ENCODE measurements at regions of chr5 and their contacts with region 1.

Region 1: DNA sequence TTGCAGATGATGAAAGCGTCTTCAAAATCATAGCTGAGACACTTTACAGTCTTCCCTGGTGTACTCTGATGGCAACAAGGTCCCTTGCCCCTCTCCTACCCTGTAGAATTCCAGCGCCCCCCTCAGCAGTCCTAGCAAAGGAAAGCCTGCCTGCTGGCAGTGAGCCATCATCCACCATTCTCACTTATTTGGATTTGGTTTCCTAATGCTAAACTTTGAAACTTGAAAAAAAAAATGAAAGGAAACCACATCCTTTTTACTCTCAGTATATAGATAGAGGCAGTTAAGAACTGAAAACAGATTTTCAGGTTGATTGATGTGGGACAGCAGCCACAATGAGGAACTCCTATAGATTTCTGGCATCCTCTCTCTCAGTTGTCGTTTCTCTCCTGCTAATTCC is at the start of gene GZMA:
- DNase-seq: peak; percentile 86
- H3K4me3 Mint-ChIP-seq: peak within 1 kb of the TSS; percentile 80
- H3K27ac Mint-ChIP-seq: peak within 1 kb of the TSS; percentile 89
- H3K4me1 Mint-ChIP-seq: peaks cover 79% of the 10 kb centered on the region
- H3K27me3 Mint-ChIP-seq: peaks cover 1% of the 10 kb centered on the region
- total RNA-seq, gene GZMA: 87.6 and 91.2 TPM in 2 replicates

Region 2: DNA sequence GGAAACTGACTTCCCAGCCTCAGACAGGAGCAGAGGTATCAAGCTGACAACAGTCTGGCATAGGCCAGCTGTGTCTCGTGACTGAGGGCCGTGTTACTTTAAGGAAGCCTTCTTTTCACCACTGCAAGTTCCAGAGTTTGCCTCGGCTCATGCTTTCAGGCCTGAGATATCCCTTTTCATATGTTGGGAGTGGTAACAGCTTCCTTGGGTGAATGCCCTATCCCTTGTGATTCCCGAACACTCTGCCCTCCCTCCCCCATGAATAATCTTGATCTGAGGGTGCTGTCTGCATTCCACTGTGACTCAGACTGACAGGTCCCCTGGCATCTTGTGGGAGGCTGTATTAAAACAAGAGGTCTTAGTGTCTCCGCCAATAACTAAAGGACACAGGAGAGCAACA is 742.3 kb before region 1 on chr5:
- intact Hi-C with region 1: no loop called
- DNase-seq: no peak
- H3K4me3 Mint-ChIP-seq: no peak overlapping the region
- H3K27ac Mint-ChIP-seq: no peak overlapping the region
- H3K4me1 Mint-ChIP-seq: no peaks in the 10 kb centered on the region
- H3K27me3 Mint-ChIP-seq: peaks cover 17% of the 10 kb centered on the region

Region 3: GRCh38 chr5:55004729-55005128 is 97.6 kb before region 1 on chr5:
- intact Hi-C with region 1: no loop called
- DNase-seq: no peak
- H3K4me3 Mint-ChIP-seq: no peak overlapping the region
- H3K27ac Mint-ChIP-seq: no peak overlapping the region
- H3K4me1 Mint-ChIP-seq: peaks cover 31% of the 10 kb centered on the region
- H3K27me3 Mint-ChIP-seq: peaks cover 8% of the 10 kb centered on the region

Region 4: DNA sequence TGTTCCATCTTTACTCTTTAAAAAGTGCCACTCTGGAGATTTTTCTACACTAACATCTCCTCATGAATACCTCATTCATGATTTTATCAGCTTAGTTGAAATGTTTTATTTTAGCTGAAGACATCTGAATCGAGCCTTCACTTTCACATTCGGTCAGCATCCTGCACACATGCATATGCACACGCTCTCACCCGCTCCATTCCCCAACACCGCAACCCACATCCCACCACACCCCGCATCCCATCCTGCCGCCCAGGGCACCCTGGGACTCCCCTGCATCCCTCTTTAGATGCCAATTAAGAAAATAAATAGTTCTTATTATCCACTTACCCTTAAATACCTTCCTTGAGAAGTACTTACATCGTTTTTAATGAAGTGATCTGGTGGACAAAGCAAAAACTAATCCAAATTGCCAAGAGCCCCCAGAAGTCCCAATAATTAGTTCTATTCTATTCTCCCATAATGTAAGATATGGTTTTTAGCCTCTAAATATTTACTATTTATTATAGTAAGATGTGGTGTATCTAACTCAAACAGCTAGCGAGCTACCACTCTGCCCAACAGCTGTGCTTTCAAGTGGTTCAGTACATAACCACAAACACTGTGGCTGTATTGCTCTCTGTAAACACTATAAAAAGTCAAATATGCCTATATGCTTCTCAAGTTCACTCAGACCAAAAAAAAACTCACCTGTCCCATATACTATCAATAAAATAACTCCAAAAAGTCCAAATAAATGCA is 40.1 kb before region 1 on chr5:
- intact Hi-C with region 1: loop called (anchors 1 kb)
- DNase-seq: peak; percentile 94
- H3K4me3 Mint-ChIP-seq: peak overlapping the region; percentile 85
- H3K27ac Mint-ChIP-seq: peak overlapping the region; percentile 94
- H3K4me1 Mint-ChIP-seq: peaks cover 68% of the 10 kb centered on the region
- H3K27me3 Mint-ChIP-seq: no peaks in the 10 kb centered on the region

Region 5: GRCh38 chr5:55134053-55134722 is 31.8 kb after region 1 on chr5:
- intact Hi-C with region 1: loop called (anchors 2 kb)
- DNase-seq: peak; percentile 71
- H3K4me3 Mint-ChIP-seq: peak overlapping the region; percentile 14
- H3K27ac Mint-ChIP-seq: peak overlapping the region; percentile 6
- H3K4me1 Mint-ChIP-seq: peaks cover 20% of the 10 kb centered on the region
- H3K27me3 Mint-ChIP-seq: peaks cover 15% of the 10 kb centered on the region

Region 6: DNA sequence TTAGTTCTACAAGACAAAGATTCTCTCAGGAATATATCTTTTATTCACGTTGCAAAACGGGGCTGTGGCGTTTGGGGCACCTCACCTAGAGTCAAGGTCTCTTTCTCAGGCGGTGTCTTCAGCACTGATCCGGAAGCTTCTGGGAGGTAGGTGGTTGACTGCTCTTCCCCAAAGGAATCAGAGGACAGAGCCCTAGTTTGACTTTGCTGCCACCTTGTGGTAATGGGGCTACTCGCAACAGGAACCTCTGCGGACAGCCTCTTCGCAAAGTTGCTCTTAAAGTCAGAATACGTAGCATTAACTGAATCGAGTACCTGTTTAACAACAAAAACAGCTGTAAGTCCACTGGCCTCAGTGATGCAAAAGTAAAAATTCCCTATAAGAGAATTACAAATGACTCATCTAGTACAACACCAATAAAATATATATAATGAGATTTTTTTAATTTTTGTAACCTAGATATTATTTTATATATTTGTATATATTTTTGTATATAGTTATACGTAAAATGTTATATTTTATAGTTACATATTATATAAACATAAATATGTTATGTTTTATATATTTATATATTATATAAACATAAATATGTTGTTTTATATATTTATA is 44.3 kb after region 1 on chr5:
- intact Hi-C with region 1: loop called (anchors 2 kb)
- DNase-seq: peak; percentile 96
- H3K4me3 Mint-ChIP-seq: peak overlapping the region; percentile 53
- H3K27ac Mint-ChIP-seq: peak overlapping the region; percentile 62
- H3K4me1 Mint-ChIP-seq: peaks cover 32% of the 10 kb centered on the region
- H3K27me3 Mint-ChIP-seq: peaks cover 46% of the 10 kb centered on the region